Heart left ventricle (tissue), 16 donors: ENCODE measurements at regions of chr9 and their contacts with region 1.

Region 1: DNA sequence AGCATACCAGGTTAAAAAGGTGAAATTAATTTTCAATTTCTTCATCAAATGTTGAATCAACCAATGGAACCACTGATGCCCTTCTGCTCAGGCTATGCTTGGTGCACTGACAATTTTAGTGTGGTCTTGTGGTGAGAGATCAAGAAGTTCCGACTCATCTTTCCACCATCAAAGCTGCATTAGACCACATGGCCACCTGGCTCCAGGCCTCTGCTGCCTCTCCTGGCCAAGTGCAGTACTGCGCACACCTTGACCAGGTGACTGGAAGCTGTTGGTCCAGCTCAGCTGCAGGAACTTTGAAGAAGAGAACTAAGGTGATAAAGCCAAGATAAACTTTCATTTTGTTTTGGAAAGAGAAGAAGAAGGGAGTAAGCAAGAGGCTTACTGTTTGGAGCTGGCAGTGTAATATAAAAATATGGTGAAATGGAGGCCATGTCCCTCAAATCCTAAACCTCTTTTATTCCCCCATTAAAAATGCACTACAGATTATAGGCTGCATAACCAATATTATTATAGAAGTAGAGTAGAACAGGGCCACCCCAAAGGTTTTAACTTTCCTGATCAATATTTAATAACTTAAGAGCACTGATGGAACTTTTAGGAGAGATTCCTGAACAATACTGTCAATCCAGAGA is 315.5 kb upstream of the C9orf72 start:
- DNase-seq: no peak
- ATAC-seq: no peak
- H3K4me3 ChIP-seq: no peak overlapping the region
- H3K27ac ChIP-seq: no peak overlapping the region
- H3K4me1 ChIP-seq: no peaks in the 10 kb centered on the region
- H3K27me3 ChIP-seq: no peaks in the 10 kb centered on the region
- CTCF ChIP-seq: peak in 9 of 12 donors; percentile 12 to 48 (median 30)
- POLR2A ChIP-seq: no peak

Region 2: GRCh38 chr9:27586304-27586703 is 302.5 kb before region 1 on chr9:
- intact Hi-C with region 1: no loop called
- DNase-seq: no peak
- ATAC-seq: no peak
- H3K4me3 ChIP-seq: peak overlapping the region in 3 of 12 donors; percentile 1 to 29 (median 15)
- H3K27ac ChIP-seq: peak overlapping the region in 1 of 12 donors; percentile 89
- H3K4me1 ChIP-seq: peaks cover 0 to 30% (median 0%) of the 10 kb centered on the region in 12 donors
- H3K27me3 ChIP-seq: peaks cover 0 to 4% (median 0%) of the 10 kb centered on the region in 9 donors
- CTCF ChIP-seq: no peak
- POLR2A ChIP-seq: no peak

Region 3: DNA sequence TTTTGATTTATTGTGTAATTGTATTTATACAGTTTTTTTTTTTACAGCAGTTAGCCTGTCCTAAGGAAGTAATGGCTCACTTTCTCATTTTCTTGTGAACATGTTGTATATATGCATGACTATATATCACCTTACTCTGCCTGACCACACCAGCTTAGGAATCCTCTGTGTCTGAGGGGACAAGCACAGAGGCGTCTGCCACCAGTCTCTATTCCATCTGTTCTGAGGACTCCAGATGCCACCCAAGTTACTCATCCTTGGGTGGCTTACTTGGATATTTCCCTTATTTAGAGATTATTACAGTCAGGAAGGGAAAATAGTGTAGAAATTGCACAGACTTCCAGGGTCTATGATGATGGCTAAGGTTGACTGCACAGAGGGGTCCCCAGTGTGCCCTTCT is 59.2 kb before region 1 on chr9:
- intact Hi-C with region 1: loop called in 1 of 10 experiments (anchors 10 kb)
- DNase-seq: no peak
- ATAC-seq: no peak
- H3K4me3 ChIP-seq: no peak overlapping the region
- H3K27ac ChIP-seq: no peak overlapping the region
- H3K4me1 ChIP-seq: no peaks in the 10 kb centered on the region
- H3K27me3 ChIP-seq: no peaks in the 10 kb centered on the region
- CTCF ChIP-seq: no peak
- POLR2A ChIP-seq: no peak